Prostate gland (tissue), 2 donors: ENCODE measurements at regions of chr1 and their contacts with region 1.

Region 1: GRCh38 chr1:30911046-30911954 is 2.7 kb upstream of the SDC3 start:
- DNase-seq: peak; percentile 87
- H3K4me3 ChIP-seq: no peak overlapping the region
- H3K27ac ChIP-seq: no peak overlapping the region
- H3K4me1 ChIP-seq: no peaks in the 10 kb centered on the region
- H3K27me3 ChIP-seq: no peaks in the 10 kb centered on the region
- CTCF ChIP-seq: peak; percentile 49 to 95 (median 90)
- POLR2A ChIP-seq: no peak

Region 2: GRCh38 chr1:30718636-30719405 is 192.5 kb before region 1 on chr1:
- intact Hi-C with region 1: loop called (anchors 2 kb)
- DNase-seq: peak; percentile 98
- H3K4me3 ChIP-seq: peak overlapping the region; percentile 48 to 49
- H3K27ac ChIP-seq: peak overlapping the region; percentile 99 to 100
- H3K4me1 ChIP-seq: peaks cover 6% of the 10 kb centered on the region
- H3K27me3 ChIP-seq: no peaks in the 10 kb centered on the region
- CTCF ChIP-seq: peak; percentile 99
- POLR2A ChIP-seq: peak; percentile 99

Region 3: GRCh38 chr1:30779294-30780071 is 131.8 kb before region 1 on chr1:
- intact Hi-C with region 1: loop called (anchors 1 kb)
- DNase-seq: peak; percentile 71
- H3K4me3 ChIP-seq: no peak overlapping the region
- H3K27ac ChIP-seq: no peak overlapping the region
- H3K4me1 ChIP-seq: no peaks in the 10 kb centered on the region
- H3K27me3 ChIP-seq: no peaks in the 10 kb centered on the region
- CTCF ChIP-seq: peak; percentile 97 to 99 (median 98)
- POLR2A ChIP-seq: no peak

Region 4: DNA sequence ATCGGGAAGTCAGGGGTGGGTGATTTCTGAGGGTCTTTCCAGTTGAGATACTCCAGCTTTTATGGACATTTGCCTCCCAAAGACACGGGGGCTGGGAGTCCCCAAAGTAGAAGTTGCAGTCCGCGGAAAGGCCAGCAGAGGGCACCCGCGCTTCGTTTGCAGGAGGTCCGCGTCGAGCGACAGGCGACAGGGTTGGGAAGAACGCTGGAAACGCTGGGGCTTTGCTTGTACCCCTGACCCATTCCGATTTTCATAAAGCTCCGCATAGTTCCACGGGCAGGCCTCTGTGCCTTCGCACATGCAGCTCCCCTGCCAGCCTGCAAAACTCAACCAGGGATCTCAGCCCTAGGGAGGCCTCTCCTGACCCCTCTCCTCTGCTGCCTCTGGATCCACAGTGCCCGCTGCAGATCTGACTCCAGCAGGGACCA is 109.5 kb before region 1 on chr1:
- intact Hi-C with region 1: loop called (anchors 2 kb)
- DNase-seq: peak; percentile 73
- H3K4me3 ChIP-seq: no peak overlapping the region
- H3K27ac ChIP-seq: no peak overlapping the region
- H3K4me1 ChIP-seq: no peaks in the 10 kb centered on the region
- H3K27me3 ChIP-seq: no peaks in the 10 kb centered on the region
- CTCF ChIP-seq: peak; percentile 90 to 95 (median 94)
- POLR2A ChIP-seq: no peak

Region 5: GRCh38 chr1:30856260-30856790 is 55.0 kb before region 1 on chr1:
- intact Hi-C with region 1: loop called (anchors 5 kb)
- DNase-seq: no peak
- H3K4me3 ChIP-seq: no peak overlapping the region
- H3K27ac ChIP-seq: no peak overlapping the region
- H3K4me1 ChIP-seq: no peaks in the 10 kb centered on the region
- H3K27me3 ChIP-seq: no peaks in the 10 kb centered on the region
- CTCF ChIP-seq: no peak
- POLR2A ChIP-seq: no peak

Region 6: DNA sequence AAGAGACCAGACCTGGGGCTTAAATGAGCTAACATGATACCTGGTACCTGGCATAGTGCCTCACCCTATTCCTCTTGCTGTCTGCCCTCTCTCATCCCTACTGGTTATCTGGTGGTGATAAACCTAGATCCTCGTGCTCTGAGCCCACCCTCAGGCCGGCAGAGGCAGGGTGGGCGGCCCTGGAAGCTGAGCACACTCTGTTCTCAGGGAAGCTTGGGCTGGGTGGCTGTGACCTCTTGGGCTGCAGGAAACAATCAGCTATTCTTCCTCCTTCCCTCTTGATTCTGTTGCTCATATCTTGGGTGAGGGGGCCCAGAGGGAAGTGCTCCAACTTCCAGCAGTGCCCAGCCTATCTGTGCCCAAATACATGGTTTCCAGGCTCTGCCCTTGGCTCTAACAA is 44.7 kb before region 1 on chr1:
- intact Hi-C with region 1: no loop called
- DNase-seq: no peak
- H3K4me3 ChIP-seq: no peak overlapping the region
- H3K27ac ChIP-seq: no peak overlapping the region
- H3K4me1 ChIP-seq: no peaks in the 10 kb centered on the region
- H3K27me3 ChIP-seq: no peaks in the 10 kb centered on the region
- CTCF ChIP-seq: no peak
- POLR2A ChIP-seq: no peak